Transverse colon (tissue), 4 donors: ENCODE measurements at regions of chr9 and their contacts with region 1.

Region 1: GRCh38 chr9:76610011-76610352 is 151.0 kb downstream of the GCNT1 start:
- DNase-seq: peak; percentile 54
- H3K4me3 ChIP-seq: no peak overlapping the region
- H3K27ac ChIP-seq: peak overlapping the region in 2 of 4 donors; percentile 1 to 36
- H3K4me1 ChIP-seq: peaks cover 0 to 24% (median 13%) of the 10 kb centered on the region in 4 donors
- H3K27me3 ChIP-seq: no peaks in the 10 kb centered on the region
- CTCF ChIP-seq: no peak
- EP300 ChIP-seq: no peak
- POLR2A ChIP-seq: no peak

Region 2: DNA sequence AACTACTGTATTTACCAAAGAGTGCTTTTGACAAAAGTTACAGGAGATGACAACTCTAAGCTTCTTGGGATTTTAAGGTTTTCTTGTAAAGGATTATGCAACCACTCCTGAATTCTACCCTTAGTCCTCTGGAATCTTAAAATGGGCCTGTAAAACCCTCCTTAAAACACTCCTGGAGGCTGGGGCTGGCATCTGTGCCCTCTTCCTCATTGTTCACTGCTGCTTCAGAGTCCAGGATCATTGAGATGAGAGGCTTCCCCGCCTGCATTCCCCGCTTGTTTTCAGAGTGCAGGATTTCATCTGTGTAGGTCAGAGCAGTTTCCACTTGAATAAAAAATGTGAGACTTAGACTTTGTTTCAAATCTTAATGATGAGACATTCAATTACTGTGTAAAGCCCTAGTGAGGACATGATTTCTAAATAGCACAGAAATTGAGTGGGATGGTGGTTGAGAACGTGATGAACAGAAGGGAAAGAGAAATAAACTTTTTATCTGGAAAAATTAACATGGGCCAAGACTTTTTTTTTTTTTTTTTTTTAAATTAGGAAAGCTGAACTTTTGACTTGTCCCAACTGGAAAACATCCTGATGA is 679.2 kb before region 1 on chr9:
- in situ Hi-C with region 1: no loop called
- intact Hi-C with region 1: no loop called
- DNase-seq: no peak
- H3K4me3 ChIP-seq: no peak overlapping the region
- H3K27ac ChIP-seq: peak overlapping the region in 3 of 4 donors; percentile 25 to 34 (median 32)
- H3K4me1 ChIP-seq: peaks cover 0 to 10% (median 2%) of the 10 kb centered on the region in 4 donors
- H3K27me3 ChIP-seq: no peaks in the 10 kb centered on the region
- CTCF ChIP-seq: no peak
- EP300 ChIP-seq: no peak
- POLR2A ChIP-seq: no peak

Region 3: GRCh38 chr9:76161541-76161940 is 448.4 kb before region 1 on chr9:
- in situ Hi-C with region 1: no loop called
- intact Hi-C with region 1: no loop called
- DNase-seq: no peak
- H3K4me3 ChIP-seq: no peak overlapping the region
- H3K27ac ChIP-seq: peak overlapping the region; percentile 7 to 65 (median 42)
- H3K4me1 ChIP-seq: peaks cover 0 to 12% (median 4%) of the 10 kb centered on the region in 4 donors
- H3K27me3 ChIP-seq: no peaks in the 10 kb centered on the region
- CTCF ChIP-seq: no peak
- EP300 ChIP-seq: no peak
- POLR2A ChIP-seq: no peak

Region 4: DNA sequence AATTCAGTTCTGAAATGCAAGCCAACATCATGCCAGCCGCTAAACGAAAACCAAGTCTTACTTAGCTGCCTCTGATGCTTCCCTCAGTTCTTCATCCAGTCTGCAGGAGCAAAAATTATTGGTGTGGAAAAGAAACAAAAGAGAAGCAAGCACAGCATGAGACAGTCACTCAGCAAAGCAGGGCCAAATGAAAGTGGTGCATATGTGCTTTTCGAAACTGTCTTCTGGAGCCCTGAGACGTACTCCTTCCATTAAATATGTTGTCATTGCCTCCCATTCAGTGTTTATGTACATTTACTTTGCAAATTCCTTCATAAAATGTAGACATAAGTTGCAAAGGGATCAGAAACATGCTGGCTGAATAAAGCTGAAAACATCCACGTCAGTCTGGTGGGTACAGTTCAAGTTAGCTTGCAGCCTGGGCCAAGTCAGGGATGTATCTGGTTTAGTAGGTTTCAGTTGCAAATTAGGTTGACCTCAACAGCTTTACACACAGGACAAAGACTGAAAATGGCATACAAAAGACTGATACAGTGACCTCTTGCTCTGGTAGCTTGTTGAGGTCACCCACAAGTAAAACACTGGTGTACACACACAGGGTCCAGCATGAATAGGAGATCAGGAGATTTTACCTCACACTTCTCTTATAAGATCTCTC is 14.5 kb after region 1 on chr9:
- in situ Hi-C with region 1: no loop called
- intact Hi-C with region 1: no loop called
- DNase-seq: no peak
- H3K4me3 ChIP-seq: no peak overlapping the region
- H3K27ac ChIP-seq: no peak overlapping the region
- H3K4me1 ChIP-seq: peaks cover 0 to 15% (median 6%) of the 10 kb centered on the region in 4 donors
- H3K27me3 ChIP-seq: no peaks in the 10 kb centered on the region
- CTCF ChIP-seq: no peak
- EP300 ChIP-seq: no peak
- POLR2A ChIP-seq: no peak

Region 5: GRCh38 chr9:76704593-76705204 is 94.7 kb after region 1 on chr9:
- in situ Hi-C with region 1: loop called in 1 of 4 experiments (anchors 25 kb)
- intact Hi-C with region 1: no loop called
- DNase-seq: no peak
- H3K4me3 ChIP-seq: no peak overlapping the region
- H3K27ac ChIP-seq: no peak overlapping the region
- H3K4me1 ChIP-seq: peaks cover 0 to 2% (median 0%) of the 10 kb centered on the region in 4 donors
- H3K27me3 ChIP-seq: peaks cover 11% of the 10 kb centered on the region
- CTCF ChIP-seq: peak; percentile 54 to 75 (median 58)
- EP300 ChIP-seq: no peak
- POLR2A ChIP-seq: no peak

Region 6: DNA sequence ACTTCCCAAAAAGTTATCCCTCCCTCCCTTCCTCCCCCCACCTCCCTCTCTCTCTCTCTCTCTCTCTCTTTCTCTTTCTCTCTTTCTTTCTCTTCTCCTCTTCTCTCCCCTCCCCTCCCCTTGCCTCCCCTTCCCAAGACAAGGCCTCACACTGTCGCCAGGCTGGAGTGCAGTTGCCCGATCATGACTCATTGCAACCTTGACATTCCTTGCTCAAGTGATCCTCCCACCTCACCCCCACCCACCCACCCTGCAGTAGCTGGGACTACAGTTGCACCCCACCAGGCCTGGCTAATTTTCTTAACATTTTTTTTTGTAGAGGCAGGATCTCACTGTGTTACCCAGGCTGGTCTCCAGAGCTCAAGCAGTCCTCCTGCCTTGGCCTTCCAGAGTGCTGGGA is 600.1 kb after region 1 on chr9:
- in situ Hi-C with region 1: no loop called
- intact Hi-C with region 1: no loop called
- DNase-seq: no peak
- H3K4me3 ChIP-seq: no peak overlapping the region
- H3K27ac ChIP-seq: no peak overlapping the region
- H3K4me1 ChIP-seq: no peaks in the 10 kb centered on the region
- H3K27me3 ChIP-seq: no peaks in the 10 kb centered on the region
- CTCF ChIP-seq: no peak
- EP300 ChIP-seq: no peak
- POLR2A ChIP-seq: no peak